IMR-90 (cell line): ENCODE measurements at regions of chr2 and their contacts with region 1.

Region 1: GRCh38 chr2:218286570-218287459 is 5.5 kb downstream of the TMBIM1 start:
- DNase-seq: peak; percentile 94
- ATAC-seq: peak; percentile 78
- H3K4me3 ChIP-seq: peak overlapping the region; percentile 31
- H3K27ac ChIP-seq: peak overlapping the region; percentile 90
- H3K4me1 ChIP-seq: peaks cover 47% of the 10 kb centered on the region
- H3K27me3 ChIP-seq: no peaks in the 10 kb centered on the region
- CTCF ChIP-seq: no peak
- POLR2A ChIP-seq: no peak
- RAD21 ChIP-seq: no peak

Region 2: GRCh38 chr2:218269899-218270720 is 16.7 kb before region 1 on chr2 and contains the starts of genes AAMP and PNKD:
- CTCF ChIA-PET with region 1: interaction called, 24 read pairs
- POLR2A ChIA-PET with region 1: interaction called, 9 read pairs
- dilution Hi-C with region 1: no loop called
- in situ Hi-C with region 1: no loop called
- intact Hi-C with region 1: loop called (anchors 2 kb)
- DNase-seq: peak; percentile 99
- ATAC-seq: peak; percentile 94
- H3K4me3 ChIP-seq: peak within 1 kb of the TSS; percentile 72
- H3K27ac ChIP-seq: peak within 1 kb of the TSS; percentile 64
- H3K4me1 ChIP-seq: peaks cover 10% of the 10 kb centered on the region
- H3K27me3 ChIP-seq: no peaks in the 10 kb centered on the region
- CTCF ChIP-seq: peak; percentile 28
- POLR2A ChIP-seq: peak; percentile 93
- RAD21 ChIP-seq: no peak
- total RNA-seq, gene AAMP: 112 and 118 TPM in 2 replicates
- total RNA-seq, gene PNKD: 19.2 and 22.2 TPM in 2 replicates

Region 3: GRCh38 chr2:218406209-218406948 is 119.6 kb after region 1 on chr2:
- CTCF ChIA-PET with region 1: no interaction called
- POLR2A ChIA-PET with region 1: no interaction called
- dilution Hi-C with region 1: no loop called
- in situ Hi-C with region 1: no loop called
- intact Hi-C with region 1: no loop called
- DNase-seq: peak; percentile 89
- ATAC-seq: peak; percentile 93
- H3K4me3 ChIP-seq: peak overlapping the region; percentile 44
- H3K27ac ChIP-seq: peak overlapping the region; percentile 78
- H3K4me1 ChIP-seq: peaks cover 17% of the 10 kb centered on the region
- H3K27me3 ChIP-seq: no peaks in the 10 kb centered on the region
- CTCF ChIP-seq: peak; percentile 88
- POLR2A ChIP-seq: peak; percentile 42; the same call in 1 of the 2 replicates
- RAD21 ChIP-seq: peak; percentile 79

Region 4: GRCh38 chr2:218618102-218618860 is 331.5 kb after region 1 on chr2:
- CTCF ChIA-PET with region 1: no interaction called
- POLR2A ChIA-PET with region 1: no interaction called
- dilution Hi-C with region 1: no loop called
- in situ Hi-C with region 1: no loop called
- intact Hi-C with region 1: no loop called
- DNase-seq: no peak
- ATAC-seq: no peak
- H3K4me3 ChIP-seq: no peak overlapping the region
- H3K27ac ChIP-seq: no peak overlapping the region
- H3K4me1 ChIP-seq: no peaks in the 10 kb centered on the region; the same call in 1 of the 2 replicates
- H3K27me3 ChIP-seq: no peaks in the 10 kb centered on the region
- CTCF ChIP-seq: no peak
- POLR2A ChIP-seq: no peak
- RAD21 ChIP-seq: no peak